ENCODE measurements at regions of chr1 and their contacts with region 1.

Region 1: DNA sequence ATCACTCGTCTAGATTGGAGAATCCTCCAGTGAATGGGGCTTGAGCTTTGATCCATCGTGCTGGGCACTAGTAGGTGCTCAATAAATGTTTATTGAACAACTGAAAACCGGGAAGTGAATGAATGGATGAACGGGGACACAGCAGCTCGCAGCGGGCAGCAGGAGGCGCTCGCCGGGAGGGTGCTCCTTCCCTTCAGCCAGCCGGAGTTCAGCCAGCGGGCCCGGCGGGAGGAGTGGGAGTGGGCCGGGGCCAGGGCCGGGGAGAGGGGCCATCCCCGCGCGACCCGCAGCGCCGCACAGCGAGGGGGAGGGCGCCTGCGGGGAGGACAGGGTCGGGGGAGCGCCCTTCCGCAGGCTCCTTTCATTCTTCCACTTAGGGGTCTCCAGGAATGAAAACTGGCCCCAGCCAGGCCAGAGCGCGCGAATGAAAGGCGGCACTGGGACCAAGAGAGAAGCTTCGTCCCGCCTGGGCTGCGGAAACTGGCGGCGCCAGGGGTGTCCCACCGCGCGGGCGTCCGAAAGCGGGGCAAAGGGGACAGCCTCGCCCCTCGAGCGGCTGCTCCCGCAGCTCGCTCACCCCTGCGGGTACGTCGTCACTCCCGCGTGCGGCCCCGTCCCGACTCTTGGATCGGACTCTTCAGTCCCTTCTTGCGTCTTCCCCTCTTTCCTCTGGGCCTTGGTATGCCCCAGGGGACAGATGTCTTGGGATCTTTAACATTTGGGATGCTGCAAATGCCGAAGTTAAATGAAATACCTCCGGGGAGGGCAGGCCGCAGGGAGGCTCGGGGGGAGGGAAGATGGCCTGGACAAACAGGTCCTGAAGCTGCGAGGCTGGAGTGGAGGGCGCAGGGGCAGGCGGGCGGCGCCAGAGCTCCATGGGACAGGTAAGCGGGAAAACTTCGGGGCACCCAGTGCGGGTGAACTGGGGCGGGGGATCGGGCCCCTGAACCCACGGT is 3.6 kb upstream of the INAVA start:
- DNase-seq: no peak
- ATAC-seq: peak; percentile 40 to 54 (median 53)
- H3K4me3 ChIP-seq: peak overlapping the region; percentile 58
- H3K27ac ChIP-seq: no peak overlapping the region
- H3K4me1 ChIP-seq: peaks cover 11% of the 10 kb centered on the region
- H3K27me3 ChIP-seq: peaks cover 0 to 32% (median 19%) of the 10 kb centered on the region in 3 donors
- CTCF ChIP-seq: no peak

Region 2: DNA sequence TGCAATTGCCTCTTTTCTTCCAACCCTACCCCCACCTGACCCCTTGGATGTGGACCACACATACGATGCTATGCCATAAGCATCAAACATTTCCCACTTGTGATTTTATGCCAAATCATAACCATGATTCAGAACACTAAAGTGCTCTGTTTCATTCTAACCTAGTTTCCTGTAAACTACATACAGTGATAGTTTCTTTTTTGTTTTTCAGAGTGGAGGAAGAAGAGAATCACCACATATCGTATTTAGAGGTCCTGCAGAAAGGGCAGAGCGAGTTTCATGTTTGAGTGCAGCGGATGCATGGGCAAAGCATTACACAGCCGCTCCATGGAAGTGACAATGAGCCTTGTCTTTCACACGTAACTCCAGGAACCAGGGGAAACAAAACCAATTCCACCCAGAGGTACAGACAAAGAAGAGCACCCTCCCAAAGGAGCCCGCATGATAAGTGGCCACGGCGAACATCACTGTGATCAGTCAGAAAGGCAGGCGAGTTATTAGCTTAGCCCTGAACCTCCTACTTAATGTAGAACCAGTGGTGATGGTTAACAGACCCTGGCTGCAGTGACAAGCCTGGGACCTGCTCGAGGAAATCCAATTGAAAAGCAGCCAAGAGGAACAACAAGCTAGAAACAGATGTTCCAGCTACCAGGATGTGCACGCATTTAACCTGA is 417.3 kb before region 1 on chr1:
- intact Hi-C with region 1: no loop called
- DNase-seq: no peak
- ATAC-seq: no peak
- H3K4me3 ChIP-seq: no peak overlapping the region
- H3K27ac ChIP-seq: no peak overlapping the region
- H3K4me1 ChIP-seq: peaks cover 3% of the 10 kb centered on the region
- H3K27me3 ChIP-seq: peaks cover 0 to 5% (median 4%) of the 10 kb centered on the region in 3 donors
- CTCF ChIP-seq: no peak

Region 3: DNA sequence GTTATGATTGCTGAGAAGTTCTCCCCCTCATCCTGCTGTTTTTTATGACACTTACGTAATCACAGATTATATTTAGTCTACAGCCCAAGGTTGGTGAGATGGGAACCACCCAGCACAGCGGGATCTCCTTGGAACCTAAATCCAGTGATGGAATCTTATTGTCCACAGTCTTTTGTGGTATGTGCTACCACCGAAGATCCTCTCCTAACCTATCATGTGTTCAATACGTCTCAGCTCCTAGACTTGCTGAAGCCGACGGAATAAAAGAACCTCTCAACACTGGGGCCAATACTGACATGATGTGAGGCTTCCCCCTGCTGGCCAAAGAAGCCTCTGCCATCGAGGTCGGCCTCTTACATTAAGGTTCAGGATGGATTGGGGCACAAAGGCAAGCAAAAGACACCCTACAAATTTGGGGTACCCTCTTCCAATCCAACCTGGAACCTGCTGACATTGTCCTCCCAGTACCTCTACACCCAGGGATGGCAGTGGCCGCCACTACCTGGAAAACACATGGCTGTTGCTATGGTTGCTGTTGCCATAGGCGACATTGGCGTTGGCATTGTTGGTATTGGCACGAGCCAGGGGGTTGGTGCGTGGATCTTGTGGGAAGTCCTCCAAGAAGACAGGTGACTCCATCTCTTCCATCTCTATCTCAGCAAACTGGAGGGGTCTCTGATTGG is 151.8 kb after region 1 on chr1:
- intact Hi-C with region 1: loop called in 1 of 2 experiments (anchors 10 kb)
- DNase-seq: peak; percentile 53 to 74
- ATAC-seq: peak; percentile 61 to 86 (median 70)
- H3K4me3 ChIP-seq: no peak overlapping the region
- H3K27ac ChIP-seq: no peak overlapping the region
- H3K4me1 ChIP-seq: peaks cover 6% of the 10 kb centered on the region
- H3K27me3 ChIP-seq: no peaks in the 10 kb centered on the region
- CTCF ChIP-seq: peak; percentile 83

Region 4: GRCh38 chr1:201108614-201109013 is 217.5 kb after region 1 on chr1:
- intact Hi-C with region 1: no loop called
- DNase-seq: peak in 1 of 2 donors; percentile 11
- ATAC-seq: no peak
- H3K4me3 ChIP-seq: peak overlapping the region; percentile 69
- H3K27ac ChIP-seq: peak overlapping the region; percentile 95
- H3K4me1 ChIP-seq: peaks cover 65% of the 10 kb centered on the region
- H3K27me3 ChIP-seq: no peaks in the 10 kb centered on the region
- CTCF ChIP-seq: no peak

Region 5: DNA sequence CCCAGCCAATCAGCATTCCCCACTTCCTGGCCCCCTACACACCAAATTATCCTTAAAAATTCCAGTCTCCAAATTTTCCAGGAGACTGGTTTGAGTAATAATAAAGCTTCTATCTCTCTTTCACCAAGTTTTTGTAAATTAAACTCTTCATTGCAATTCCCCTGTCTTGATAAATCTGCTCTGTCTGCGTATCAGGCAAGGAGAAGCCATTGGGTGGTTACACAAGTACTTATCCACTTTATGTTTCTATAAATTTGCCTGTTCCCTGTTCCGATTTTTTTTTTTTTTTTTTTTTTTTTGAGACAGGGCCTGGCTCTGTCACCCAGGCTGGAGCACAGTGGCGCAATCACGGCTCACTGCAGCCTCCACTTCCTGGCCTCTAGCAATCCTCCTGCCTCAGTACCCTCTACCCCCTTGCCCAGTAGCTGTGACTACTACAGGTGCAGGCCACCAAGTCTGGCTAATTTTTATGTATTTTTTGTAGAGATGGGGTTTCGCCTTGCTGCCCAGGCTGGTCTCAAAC is 626.9 kb after region 1 on chr1:
- intact Hi-C with region 1: no loop called
- DNase-seq: no peak
- ATAC-seq: no peak
- H3K4me3 ChIP-seq: no peak overlapping the region
- H3K27ac ChIP-seq: no peak overlapping the region
- H3K4me1 ChIP-seq: no peaks in the 10 kb centered on the region
- H3K27me3 ChIP-seq: no peaks in the 10 kb centered on the region
- CTCF ChIP-seq: no peak